AG04449 (cell line): ENCODE measurements at regions of chr9 and their contacts with region 1.

Region 1: GRCh38 chr9:34989003-34989945 is at the start of gene DNAJB5:
- DNase-seq: peak; percentile 99
- H3K4me3 ChIP-seq: peak within 1 kb of the TSS; percentile 88
- CTCF ChIP-seq: no peak

Region 2: GRCh38 chr9:34974664-34975063 is 14.6 kb before region 1 on chr9:
- CTCF ChIA-PET with region 1: interaction called, 13 read pairs
- POLR2A ChIA-PET with region 1: interaction called, 3 read pairs
- DNase-seq: no peak
- H3K4me3 ChIP-seq: no peak overlapping the region
- CTCF ChIP-seq: no peak